Cardiac septum (tissue), 1 donor: ENCODE measurements at regions of chr18 and their contacts with region 1.

Region 1: DNA sequence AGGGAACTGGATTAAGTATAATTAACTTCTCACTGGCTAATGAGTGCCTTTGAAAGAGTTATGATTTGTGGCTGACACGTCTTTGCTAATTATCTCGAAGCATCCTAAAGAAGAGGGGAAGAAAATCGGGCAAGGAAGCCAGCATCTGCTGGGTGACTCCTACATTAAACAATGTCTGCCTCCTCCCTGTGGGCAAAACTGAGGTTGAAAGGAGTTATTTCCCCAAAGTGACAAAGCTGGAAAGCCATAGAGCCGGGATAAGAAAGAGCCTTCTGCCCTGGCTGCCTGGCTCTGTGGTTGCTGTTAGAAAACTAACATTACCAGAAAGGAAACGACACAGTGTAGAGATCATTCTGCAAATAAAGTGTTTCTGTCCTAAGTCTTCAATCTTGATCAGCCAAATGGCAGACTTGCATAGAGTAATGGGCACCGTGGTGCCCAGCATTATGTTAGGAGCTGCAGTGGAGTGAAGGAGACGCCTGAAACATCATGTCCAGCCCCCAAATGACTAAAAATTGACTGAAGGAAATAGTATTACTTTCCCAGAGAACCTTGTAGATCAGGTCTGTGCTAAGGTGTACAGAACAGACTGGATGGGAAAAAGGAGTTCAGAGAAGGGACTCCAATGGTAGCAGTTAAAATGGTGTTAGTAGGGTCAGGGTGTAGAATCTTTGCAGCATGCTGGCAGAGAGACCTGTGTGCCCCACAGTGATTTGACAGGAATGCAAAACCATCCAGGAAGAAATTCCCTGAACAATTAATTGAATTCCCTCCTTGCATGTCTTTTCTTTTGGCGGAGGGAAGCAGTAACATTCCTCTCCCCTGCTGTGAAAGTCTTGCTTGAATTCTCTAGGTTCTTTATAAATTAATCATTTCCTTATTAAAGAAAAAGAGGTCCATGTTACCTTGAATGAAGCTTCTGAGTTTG is 44.4 kb downstream of the ALPK2 start:
- DNase-seq: no peak

Region 2: GRCh38 chr18:58572181-58572580 is 12.3 kb before region 1 on chr18:
- intact Hi-C with region 1: no loop called
- DNase-seq: no peak

Region 3: GRCh38 chr18:58632552-58632951 is 48.1 kb after region 1 on chr18:
- intact Hi-C with region 1: loop called (anchors 5 kb)
- DNase-seq: peak; percentile 78

Region 4: GRCh38 chr18:58682429-58683069 is 98.1 kb after region 1 on chr18:
- intact Hi-C with region 1: no loop called
- DNase-seq: no peak